Endothelial cell of umbilical vein (primary cell): ENCODE measurements at regions of chr9 and their contacts with region 1.

Region 1: GRCh38 chr9:114285166-114285867 is 37.6 kb upstream of the ORM1 start:
- DNase-seq: peak; percentile 37
- H3K4me3 ChIP-seq: no peak overlapping the region
- H3K27ac ChIP-seq: no peak overlapping the region
- H3K4me1 ChIP-seq: no peaks in the 10 kb centered on the region
- H3K27me3 ChIP-seq: no peaks in the 10 kb centered on the region
- CTCF ChIP-seq: no peak
- POLR2A ChIP-seq: no peak

Region 2: DNA sequence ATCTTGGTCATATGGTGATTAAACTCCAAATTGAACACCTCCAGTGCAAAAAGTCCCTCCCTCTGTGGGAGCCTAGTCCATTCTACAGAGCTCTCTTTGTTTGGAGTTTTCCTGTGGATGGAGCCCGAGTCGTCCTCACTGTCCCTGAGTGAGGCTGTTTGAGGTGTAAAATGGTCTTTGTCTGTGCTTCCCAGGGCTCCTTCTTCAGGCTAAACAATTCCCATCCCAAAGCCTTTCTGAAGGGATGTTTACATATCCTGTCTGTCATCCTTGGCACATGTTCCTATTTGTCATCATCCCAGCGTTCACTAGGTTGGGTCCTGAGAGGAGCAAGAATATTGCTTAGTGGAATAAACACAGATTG is 61.1 kb before region 1 on chr9:
- CTCF ChIA-PET with region 1: no interaction called
- POLR2A ChIA-PET with region 1: no interaction called
- dilution Hi-C with region 1: no loop called
- intact Hi-C with region 1: loop called (anchors 5 kb)
- DNase-seq: peak; percentile 51
- H3K4me3 ChIP-seq: no peak overlapping the region
- H3K27ac ChIP-seq: peak overlapping the region; percentile 91
- H3K4me1 ChIP-seq: peaks cover 69% of the 10 kb centered on the region
- H3K27me3 ChIP-seq: no peaks in the 10 kb centered on the region
- CTCF ChIP-seq: no peak
- POLR2A ChIP-seq: peak; percentile 26

Region 3: GRCh38 chr9:114428466-114428865 is 143.1 kb after region 1 on chr9:
- CTCF ChIA-PET with region 1: no interaction called
- POLR2A ChIA-PET with region 1: no interaction called
- dilution Hi-C with region 1: no loop called
- intact Hi-C with region 1: no loop called
- DNase-seq: no peak
- H3K4me3 ChIP-seq: no peak overlapping the region
- H3K27ac ChIP-seq: no peak overlapping the region
- H3K4me1 ChIP-seq: no peaks in the 10 kb centered on the region
- H3K27me3 ChIP-seq: peaks cover 3 to 4% of the 10 kb centered on the region in 2 experiments
- CTCF ChIP-seq: no peak
- POLR2A ChIP-seq: no peak